ENCODE measurements at regions of chr10 and their contacts with region 1.

Region 1: DNA sequence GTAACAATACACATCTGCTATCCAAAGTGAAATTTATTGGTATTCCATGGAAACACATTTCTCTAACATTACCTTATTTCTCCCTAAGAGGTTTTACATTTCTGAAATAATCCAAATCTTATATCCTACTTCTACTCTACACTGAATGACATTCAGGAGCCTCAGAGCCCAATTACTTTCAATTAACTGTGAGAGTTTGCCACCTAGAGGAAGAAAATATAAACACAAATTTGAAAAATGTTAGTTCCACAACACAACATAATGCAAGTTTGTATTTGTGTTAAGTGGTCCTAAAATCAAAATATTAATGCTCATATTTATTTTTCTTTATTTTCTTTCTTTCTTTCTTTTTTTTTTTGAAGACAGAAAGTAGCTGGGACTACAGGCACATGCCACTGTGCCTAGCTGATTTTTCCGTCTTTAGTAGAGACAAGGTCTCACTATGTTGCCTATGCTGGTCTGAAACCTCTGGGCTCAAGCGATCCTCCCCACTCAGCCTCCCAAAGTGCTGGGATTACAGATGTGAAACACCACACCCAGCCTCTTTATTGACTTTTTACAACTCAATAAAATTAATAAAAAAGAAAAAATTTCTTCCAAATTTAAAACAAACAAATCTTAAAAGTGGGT is 46.0 kb downstream of the ATAD1 start:
- DNase-seq: no peak
- ATAC-seq: peak in 1 of 4 donors; percentile 43
- H3K4me3 ChIP-seq: no peak overlapping the region
- H3K27ac ChIP-seq: no peak overlapping the region
- H3K4me1 ChIP-seq: no peaks in the 10 kb centered on the region
- H3K27me3 ChIP-seq: no peaks in the 10 kb centered on the region
- CTCF ChIP-seq: peak; percentile 49

Region 2: DNA sequence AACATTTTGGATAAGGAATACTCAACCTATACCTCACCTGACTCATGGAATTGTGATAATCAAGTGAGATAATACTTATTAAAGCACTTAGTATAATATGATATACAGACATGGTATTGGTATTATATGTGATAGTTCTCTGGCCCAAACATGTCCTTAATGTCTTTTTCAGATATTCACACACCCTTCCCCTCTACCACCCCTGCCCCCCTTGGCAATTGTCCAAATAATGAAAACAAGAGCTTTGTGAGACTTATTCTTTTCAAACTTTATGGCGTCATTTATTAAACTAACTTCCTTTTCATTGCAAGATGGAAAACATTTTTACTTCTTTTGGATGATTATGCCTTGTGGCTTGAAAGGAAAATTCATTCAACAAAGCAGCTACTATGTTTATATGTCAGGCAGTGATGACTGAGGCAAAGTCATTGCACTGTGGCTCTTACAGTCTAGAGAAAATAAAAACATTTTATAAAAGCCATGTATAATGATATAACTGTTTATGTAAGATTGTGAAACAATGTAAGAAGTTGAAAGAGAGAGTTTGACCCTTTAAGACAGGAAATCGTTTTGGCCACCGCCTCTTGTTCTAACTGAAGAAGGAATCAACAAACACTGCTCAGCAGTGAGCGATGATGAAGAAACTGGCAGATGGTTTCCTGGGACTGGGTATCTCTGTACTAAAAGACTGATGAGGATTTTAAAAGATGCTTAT is 239.9 kb before region 1 on chr10:
- intact Hi-C with region 1: loop called in 1 of 2 experiments (anchors 10 kb)
- DNase-seq: no peak
- ATAC-seq: no peak
- H3K4me3 ChIP-seq: no peak overlapping the region
- H3K27ac ChIP-seq: no peak overlapping the region
- H3K4me1 ChIP-seq: no peaks in the 10 kb centered on the region
- H3K27me3 ChIP-seq: no peaks in the 10 kb centered on the region
- CTCF ChIP-seq: no peak

Region 3: DNA sequence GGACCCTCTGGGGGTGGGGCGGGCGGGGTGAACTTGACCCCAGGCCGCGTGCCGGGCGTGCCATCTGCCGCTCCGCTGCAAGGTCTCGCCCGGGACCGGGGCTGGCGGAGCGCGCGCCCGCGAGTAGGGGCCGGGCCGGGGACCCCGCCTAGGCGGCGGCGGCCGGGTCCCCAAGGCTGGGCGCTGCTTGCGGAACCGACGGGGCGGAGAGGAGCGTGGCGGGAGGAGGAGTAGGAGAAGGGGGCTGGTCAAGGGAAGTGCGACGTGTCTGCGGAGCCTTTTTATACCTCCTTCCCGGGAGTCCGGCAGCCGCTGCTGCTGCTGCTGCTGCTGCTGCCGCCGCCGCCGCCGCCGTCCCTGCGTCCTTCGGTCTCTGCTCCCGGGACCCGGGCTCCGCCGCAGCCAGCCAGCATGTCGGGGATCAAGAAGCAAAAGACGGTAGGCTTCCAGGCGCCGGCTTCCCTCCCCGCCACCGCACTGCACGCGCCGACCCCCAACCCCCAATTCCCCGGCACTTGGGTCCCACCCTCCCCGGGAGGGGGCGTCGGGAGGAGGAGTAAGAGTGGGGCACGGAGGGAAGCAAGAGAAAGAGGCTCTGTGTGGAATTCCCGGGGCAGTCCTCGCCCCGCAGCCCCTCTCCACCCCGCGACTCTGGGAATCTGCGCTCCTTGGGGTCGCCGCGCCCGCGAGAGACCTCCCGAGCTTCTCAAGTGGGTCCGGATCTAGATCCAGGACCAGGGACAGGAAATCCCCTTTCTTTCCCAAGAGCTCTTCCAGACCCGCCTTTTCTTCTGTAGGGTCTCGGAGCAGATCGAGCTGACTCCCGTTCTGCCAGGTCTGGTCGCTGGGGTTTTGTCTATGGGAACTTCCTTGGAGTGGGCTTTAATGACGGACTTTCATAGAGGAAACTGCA is 112.2 kb before region 1 on chr10 and contains the start of gene PAPSS2:
- intact Hi-C with region 1: loop called in 1 of 2 experiments (anchors 5 kb)
- DNase-seq: peak; percentile 56 to 70
- ATAC-seq: peak; percentile 47 to 72 (median 58)
- H3K4me3 ChIP-seq: peak within 1 kb of the TSS; percentile 67
- H3K27ac ChIP-seq: peak within 1 kb of the TSS; percentile 34
- H3K4me1 ChIP-seq: no peaks in the 10 kb centered on the region
- H3K27me3 ChIP-seq: peaks cover 0 to 28% (median 11%) of the 10 kb centered on the region in 3 donors
- CTCF ChIP-seq: no peak
- total RNA-seq, gene PAPSS2: 3.8 to 11.0 (median 5.2) TPM

Region 4: DNA sequence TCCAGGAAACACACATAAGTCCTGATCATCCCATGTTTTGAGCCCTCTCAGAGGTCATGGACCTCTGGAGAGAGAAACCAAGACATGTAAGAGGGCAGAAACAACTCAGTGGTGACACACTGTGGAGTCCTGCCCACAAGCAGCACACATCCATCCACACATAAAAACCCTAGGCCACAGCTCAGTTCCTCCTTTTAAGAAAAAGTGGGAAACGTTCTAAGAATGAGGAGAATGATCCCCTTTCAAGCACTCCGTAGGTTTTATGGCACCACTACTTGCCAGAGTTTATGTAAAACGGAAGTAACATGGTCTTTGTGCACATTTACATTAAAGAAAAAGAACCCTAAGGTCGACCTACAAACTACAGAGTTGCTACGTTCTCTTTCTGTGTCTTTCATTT is 26.1 kb after region 1 on chr10:
- intact Hi-C with region 1: loop called in 1 of 2 experiments (anchors 1 kb)
- DNase-seq: no peak
- ATAC-seq: no peak
- H3K4me3 ChIP-seq: no peak overlapping the region
- H3K27ac ChIP-seq: no peak overlapping the region
- H3K4me1 ChIP-seq: peaks cover 3% of the 10 kb centered on the region
- H3K27me3 ChIP-seq: no peaks in the 10 kb centered on the region
- CTCF ChIP-seq: no peak

Measured in psoas muscle (tissue), 8 donors.